Common myeloid progenitor, CD34-positive (primary cell): ENCODE measurements at regions of chr14 and their contacts with region 1.

Region 1: DNA sequence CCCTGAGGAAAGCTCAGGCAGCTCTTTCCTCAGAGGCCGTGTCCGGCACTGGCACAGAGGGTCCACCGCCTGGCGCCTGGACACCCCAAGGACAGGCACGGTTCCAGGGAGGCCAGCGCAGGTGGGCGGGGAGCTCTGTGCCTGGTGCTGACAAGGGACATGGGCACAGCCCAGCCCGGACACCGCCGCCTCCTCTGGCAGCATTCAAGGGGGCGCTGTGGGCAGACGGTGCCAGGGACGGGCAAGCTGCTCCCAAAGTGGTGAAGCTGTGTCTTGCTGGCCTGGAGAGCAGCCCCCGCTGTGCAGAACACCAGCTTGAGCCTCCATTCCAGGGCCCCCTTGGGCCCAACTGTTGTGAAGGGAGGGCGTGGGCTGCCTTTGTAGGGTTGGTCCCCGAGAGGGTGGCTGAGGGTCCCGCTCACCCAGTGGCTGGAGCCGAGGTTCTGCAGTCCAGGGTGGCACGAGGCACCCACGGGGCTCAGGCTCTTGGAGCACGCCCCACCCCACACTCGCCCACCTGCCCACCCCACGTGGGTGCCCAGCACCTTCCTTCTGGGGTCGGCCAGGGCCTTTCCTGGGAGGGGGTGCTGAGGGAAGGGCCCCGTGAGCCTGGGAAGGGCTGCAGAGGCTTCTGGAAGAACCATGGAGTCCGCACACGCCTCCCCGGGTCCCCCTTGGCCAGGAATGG is 29.2 kb upstream of the TEX22 start:
- DNase-seq: no peak
- H3K4me3 ChIP-seq: no peak overlapping the region
- H3K27ac ChIP-seq: no peak overlapping the region
- H3K4me1 ChIP-seq: peaks cover 0 to 10% (median 9%) of the 10 kb centered on the region in 4 experiments
- H3K27me3 ChIP-seq: no peaks in the 10 kb centered on the region

Region 2: DNA sequence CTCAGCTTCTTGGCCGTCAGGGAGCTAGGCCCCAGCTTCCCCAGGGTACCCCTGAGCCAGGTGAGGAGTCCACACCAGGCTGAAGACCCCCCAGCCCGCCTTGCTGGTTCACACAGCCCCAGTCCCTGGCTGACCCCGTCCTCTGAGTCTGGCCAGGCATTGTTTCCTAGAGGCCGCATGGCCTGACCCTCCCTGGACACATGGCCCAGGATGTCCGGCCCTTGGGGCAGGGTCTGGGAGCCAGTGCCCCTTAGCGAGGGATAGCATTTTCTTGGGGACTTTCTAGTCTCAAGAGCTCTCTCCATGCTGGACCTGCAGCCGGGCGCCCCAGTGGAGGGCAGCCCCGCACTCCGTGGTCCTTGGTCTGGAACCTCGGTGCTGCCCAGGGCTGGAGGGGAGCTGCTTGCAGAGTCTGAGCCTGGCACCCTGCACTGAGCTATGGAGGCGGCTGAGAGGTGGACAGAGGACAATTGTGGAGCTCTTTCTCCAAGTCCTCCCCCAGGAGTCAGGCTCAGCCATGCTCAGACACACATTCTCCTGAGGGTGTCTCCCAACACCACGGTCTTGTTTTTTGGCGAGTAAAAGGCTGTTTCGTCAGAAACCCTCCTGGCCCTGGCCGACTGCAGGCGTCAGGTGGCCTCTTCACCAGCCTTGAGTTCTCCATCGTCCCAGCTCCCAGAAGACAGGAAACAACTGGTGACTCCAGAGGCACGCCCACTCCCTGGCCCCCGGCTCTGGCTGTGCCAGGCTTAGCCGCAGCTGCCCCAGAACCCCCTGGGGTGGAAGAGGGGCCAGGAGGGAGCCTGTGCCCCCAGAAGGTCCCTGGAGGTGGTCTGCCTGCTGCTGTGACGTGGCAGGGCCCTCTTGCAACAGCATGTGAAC is 87.9 kb after region 1 on chr14:
- CTCF ChIA-PET with region 1: interaction called, 10 read pairs
- POLR2A ChIA-PET with region 1: no interaction called
- DNase-seq: no peak
- H3K4me3 ChIP-seq: no peak overlapping the region
- H3K27ac ChIP-seq: no peak overlapping the region
- H3K4me1 ChIP-seq: no peaks in the 10 kb centered on the region
- H3K27me3 ChIP-seq: no peaks in the 10 kb centered on the region

Region 3: GRCh38 chr14:105490572-105491366 is 121.7 kb after region 1 on chr14 and contains the start of gene TEDC1:
- CTCF ChIA-PET with region 1: interaction called, 68 read pairs
- POLR2A ChIA-PET with region 1: interaction called, 5 read pairs
- DNase-seq: peak; percentile 100
- H3K4me3 ChIP-seq: peak within 1 kb of the TSS; percentile 58 to 83 (median 75)
- H3K27ac ChIP-seq: peak within 1 kb of the TSS; percentile 70 to 88
- H3K4me1 ChIP-seq: peaks cover 0 to 55% (median 52%) of the 10 kb centered on the region in 4 experiments
- H3K27me3 ChIP-seq: peaks cover 0 to 29% (median 5%) of the 10 kb centered on the region in 5 experiments

Region 4: GRCh38 chr14:105503935-105504692 is 135.0 kb after region 1 on chr14:
- CTCF ChIA-PET with region 1: no interaction called
- POLR2A ChIA-PET with region 1: no interaction called
- DNase-seq: no peak
- H3K4me3 ChIP-seq: no peak overlapping the region
- H3K27ac ChIP-seq: no peak overlapping the region
- H3K4me1 ChIP-seq: peaks cover 0 to 11% (median 5%) of the 10 kb centered on the region in 4 experiments
- H3K27me3 ChIP-seq: peaks cover 0 to 22% (median 6%) of the 10 kb centered on the region in 5 experiments

Region 5: DNA sequence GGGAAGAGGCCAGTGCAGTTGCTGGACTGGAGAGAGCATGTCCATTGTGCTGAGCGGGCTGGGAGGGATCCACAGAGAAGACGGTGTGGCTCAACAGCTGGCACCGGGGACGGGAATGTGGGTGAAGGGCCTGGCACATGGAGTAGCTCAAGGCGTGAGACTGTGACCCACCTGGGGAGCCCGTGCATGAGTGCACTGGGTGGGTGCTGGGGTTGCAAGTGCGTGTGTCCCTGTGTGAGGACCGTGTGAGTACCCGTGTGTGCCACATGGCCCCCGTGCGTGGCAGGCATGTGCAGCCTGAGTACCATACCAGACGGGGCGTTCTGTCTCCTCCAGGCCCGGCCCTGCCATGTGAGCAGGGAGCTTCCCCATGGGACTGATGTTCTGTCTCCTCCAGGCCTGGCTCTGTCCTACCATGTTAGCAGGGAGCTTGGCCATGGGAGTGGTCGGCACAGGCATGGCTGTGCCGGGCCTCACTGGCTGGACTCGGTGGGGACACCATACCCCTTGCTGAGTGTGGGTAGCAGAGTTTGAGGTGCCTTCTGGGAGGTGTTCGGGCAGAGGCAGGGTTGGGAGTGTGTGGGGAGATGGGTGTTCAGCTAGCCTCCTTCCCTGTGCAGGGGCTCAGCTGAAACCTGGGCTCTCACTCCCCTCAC is 391.7 kb after region 1 on chr14:
- CTCF ChIA-PET with region 1: no interaction called
- POLR2A ChIA-PET with region 1: no interaction called
- DNase-seq: no peak
- H3K4me3 ChIP-seq: no peak overlapping the region
- H3K27ac ChIP-seq: no peak overlapping the region
- H3K4me1 ChIP-seq: no peaks in the 10 kb centered on the region
- H3K27me3 ChIP-seq: no peaks in the 10 kb centered on the region